SK-N-SH (cell line): ENCODE measurements at regions of chr15 and their contacts with region 1.

Region 1: DNA sequence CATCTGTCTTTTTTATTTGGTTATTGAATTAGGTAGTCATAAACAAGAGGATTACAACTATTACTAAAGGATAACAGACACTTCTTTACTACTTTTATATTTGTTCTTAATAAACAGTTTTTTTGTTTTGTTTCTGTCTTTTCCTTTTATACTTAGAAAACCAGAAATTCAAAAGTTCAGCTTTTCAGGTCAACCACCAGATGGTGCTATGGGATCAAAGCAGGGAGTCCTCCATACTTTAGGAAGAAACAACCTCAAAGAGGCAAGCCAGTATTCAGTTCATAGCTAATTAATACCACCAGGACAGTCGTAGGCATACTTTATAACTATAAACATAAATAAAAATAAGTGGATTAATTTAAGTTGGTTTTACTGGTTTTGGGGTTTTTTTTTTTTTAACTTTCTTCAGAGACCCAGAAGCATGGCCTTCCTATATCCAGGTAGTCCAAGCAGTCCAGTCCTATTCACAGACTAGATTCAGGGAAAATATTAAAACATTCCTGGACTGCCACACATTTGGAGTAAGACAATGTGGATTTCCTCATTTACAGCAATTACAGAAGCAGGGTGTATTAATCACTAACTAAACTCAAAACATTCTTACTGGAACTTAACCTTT is 16.0 kb upstream of the EID1 start:
- DNase-seq: peak; percentile 58
- H3K4me3 ChIP-seq: no peak overlapping the region
- H3K27ac ChIP-seq: no peak overlapping the region
- H3K4me1 ChIP-seq: peaks cover 1 to 31% of the 10 kb centered on the region in 2 experiments; a peak in 3 of 4 replicates
- H3K27me3 ChIP-seq: no peaks in the 10 kb centered on the region
- CTCF ChIP-seq: peak; percentile 98
- EP300 ChIP-seq: no peak
- RAD21 ChIP-seq: peak; percentile 99

Region 2: GRCh38 chr15:48877630-48878595 is 16.0 kb after region 1 on chr15 and contains the start of gene EID1:
- CTCF ChIA-PET with region 1: interaction called, 33 read pairs
- POLR2A ChIA-PET with region 1: interaction called, 3 read pairs
- DNase-seq: peak; percentile 90
- H3K4me3 ChIP-seq: peak within 1 kb of the TSS; percentile 82 to 98
- H3K27ac ChIP-seq: peak within 1 kb of the TSS; percentile 82 to 98
- H3K4me1 ChIP-seq: peaks cover 0 to 12% of the 10 kb centered on the region in 2 experiments; a peak in 2 of 4 replicates
- H3K27me3 ChIP-seq: no peaks in the 10 kb centered on the region
- CTCF ChIP-seq: peak; percentile 16; the same call in 1 of the 2 replicates
- EP300 ChIP-seq: no peak
- RAD21 ChIP-seq: peak; percentile 2; the same call in 1 of the 2 replicates
- polyA plus RNA-seq, gene EID1: 170 and 228 TPM in 2 replicates

Region 3: GRCh38 chr15:49040151-49040550 is 178.2 kb after region 1 on chr15:
- CTCF ChIA-PET with region 1: interaction called, 13 read pairs
- POLR2A ChIA-PET with region 1: no interaction called
- DNase-seq: no peak
- H3K4me3 ChIP-seq: no peak overlapping the region
- H3K27ac ChIP-seq: no peak overlapping the region
- H3K4me1 ChIP-seq: peaks cover 5 to 23% of the 10 kb centered on the region in 2 experiments; a peak in 2 of 4 replicates
- H3K27me3 ChIP-seq: no peaks in the 10 kb centered on the region
- CTCF ChIP-seq: no peak
- EP300 ChIP-seq: no peak
- RAD21 ChIP-seq: no peak

Region 4: DNA sequence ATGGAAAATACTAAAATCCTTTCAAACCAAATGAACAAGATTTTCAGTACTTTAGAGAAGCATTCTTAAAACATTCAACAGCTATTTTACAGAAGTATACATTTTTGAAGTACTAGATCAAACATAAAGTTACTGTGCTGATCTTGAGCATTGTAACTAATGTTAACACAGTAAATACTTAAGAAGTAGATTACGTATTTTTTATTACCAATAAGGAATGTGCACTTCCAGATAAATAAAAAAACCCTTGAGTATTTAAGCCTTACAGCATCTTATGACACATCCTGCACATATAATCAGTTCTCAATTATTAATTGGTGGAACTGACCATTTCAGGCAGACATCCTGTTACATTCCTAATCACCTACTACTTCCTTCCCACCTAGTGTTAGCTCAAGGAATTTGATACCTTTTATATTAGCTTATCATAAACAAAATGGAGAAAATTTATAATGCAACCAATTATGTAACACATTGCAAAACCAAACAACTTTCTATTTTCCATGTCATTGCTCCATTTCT is 260.7 kb after region 1 on chr15:
- CTCF ChIA-PET with region 1: interaction called, 15 read pairs
- POLR2A ChIA-PET with region 1: no interaction called
- DNase-seq: no peak
- H3K4me3 ChIP-seq: no peak overlapping the region
- H3K27ac ChIP-seq: no peak overlapping the region
- H3K4me1 ChIP-seq: no peaks in the 10 kb centered on the region; a peak in 1 of 4 replicates
- H3K27me3 ChIP-seq: no peaks in the 10 kb centered on the region
- CTCF ChIP-seq: no peak
- EP300 ChIP-seq: no peak
- RAD21 ChIP-seq: no peak

Region 5: DNA sequence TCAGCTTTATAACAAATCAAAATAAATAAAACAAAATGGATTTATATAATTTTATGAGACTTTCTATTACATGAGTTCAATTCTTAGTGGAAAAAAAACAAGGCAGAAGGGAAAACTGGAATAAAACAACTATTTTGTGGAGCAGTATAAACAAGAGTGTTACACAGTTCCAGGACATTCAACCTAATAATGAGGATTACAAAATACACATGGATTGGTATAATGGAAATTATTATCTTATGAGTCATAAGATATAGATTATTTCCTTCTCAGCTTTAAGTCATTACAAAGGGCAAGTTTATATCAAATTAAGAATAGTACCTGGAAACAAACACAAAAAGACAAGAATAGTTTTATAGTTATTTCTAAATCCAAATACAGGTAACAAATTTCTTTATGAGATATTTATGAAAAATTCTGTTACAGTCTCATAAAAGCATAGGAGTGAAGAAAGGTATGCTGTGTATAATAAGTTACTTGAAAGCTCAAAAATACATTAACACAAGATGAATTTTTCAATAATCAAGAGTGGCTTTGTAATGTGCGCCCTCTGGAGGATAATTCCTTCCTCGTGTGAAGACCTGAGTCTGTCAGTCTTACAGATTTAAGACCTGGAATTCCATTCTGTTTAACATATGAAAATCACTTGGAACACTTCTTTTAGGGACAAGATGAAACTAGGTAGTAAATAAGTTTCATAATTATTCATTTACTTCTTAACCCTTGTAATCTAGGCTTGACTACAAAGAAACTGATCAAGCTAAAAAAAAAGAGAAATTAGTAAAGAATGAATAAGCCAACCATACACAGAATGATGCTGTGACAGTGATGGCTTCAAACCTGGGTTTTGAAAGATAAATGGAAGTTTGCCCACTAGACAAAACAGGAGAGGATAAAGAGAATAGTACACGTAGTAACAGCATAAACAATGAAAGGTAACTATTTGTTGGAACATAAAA is 284.0 kb after region 1 on chr15:
- CTCF ChIA-PET with region 1: interaction called, 68 read pairs
- POLR2A ChIA-PET with region 1: no interaction called
- DNase-seq: peak; percentile 33
- H3K4me3 ChIP-seq: no peak overlapping the region; a peak in 1 of 4 replicates
- H3K27ac ChIP-seq: peak overlapping the region in 1 of 2 experiments; percentile 39; a peak in 1 of 4 replicates
- H3K4me1 ChIP-seq: peaks cover 6 to 7% of the 10 kb centered on the region in 2 experiments; a peak in 2 of 4 replicates
- H3K27me3 ChIP-seq: no peaks in the 10 kb centered on the region
- CTCF ChIP-seq: peak; percentile 92
- EP300 ChIP-seq: no peak
- RAD21 ChIP-seq: peak; percentile 77

Region 6: DNA sequence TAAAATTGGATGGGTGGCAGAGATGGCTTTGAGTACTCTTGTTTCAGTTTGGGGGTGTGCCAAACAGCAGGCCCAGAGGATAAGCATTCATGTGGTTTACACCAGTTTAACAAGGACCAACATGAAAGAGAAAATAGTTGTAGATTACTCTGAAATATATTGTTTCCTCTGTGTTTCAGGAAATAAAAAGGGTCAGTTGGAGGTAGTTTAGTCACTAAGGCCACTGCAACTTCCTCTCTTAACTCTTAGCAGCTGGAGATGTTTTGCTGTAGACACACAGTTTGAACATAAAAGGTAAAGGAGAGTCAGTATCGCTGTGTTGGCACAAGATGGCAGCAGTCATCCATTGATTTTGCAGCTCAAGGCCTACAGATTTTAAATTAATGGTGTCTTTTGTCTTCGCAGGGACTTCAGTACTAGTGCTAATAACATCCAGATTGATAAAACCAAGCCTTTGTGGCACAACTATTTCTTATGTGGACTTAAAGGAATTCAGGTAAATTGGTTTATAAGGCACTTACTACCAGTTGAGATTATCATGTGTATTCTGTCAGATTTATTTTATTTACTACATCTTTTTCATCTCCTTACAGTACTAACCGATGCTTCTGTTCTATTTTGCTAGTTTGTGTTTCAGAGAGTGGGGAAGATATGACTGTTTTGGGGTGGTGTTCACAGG is 373.7 kb after region 1 on chr15:
- CTCF ChIA-PET with region 1: interaction called, 28 read pairs
- POLR2A ChIA-PET with region 1: no interaction called
- DNase-seq: peak; percentile 44
- H3K4me3 ChIP-seq: no peak overlapping the region; a peak in 1 of 4 replicates
- H3K27ac ChIP-seq: peak overlapping the region; percentile 30 to 86; a peak in 3 of 4 replicates
- H3K4me1 ChIP-seq: peaks cover 28 to 33% of the 10 kb centered on the region in 2 experiments; a peak in 3 of 4 replicates
- H3K27me3 ChIP-seq: no peaks in the 10 kb centered on the region
- CTCF ChIP-seq: peak; percentile 92
- EP300 ChIP-seq: no peak; a peak in 1 of 4 replicates
- RAD21 ChIP-seq: peak; percentile 99

Region 7: GRCh38 chr15:50145451-50145872 is 1283.5 kb after region 1 on chr15:
- CTCF ChIA-PET with region 1: interaction called, 26 read pairs
- POLR2A ChIA-PET with region 1: no interaction called
- DNase-seq: peak; percentile 67
- H3K4me3 ChIP-seq: no peak overlapping the region; a peak in 1 of 4 replicates
- H3K27ac ChIP-seq: no peak overlapping the region
- H3K4me1 ChIP-seq: no peaks in the 10 kb centered on the region; a peak in 1 of 4 replicates
- H3K27me3 ChIP-seq: no peaks in the 10 kb centered on the region
- CTCF ChIP-seq: peak; percentile 70
- EP300 ChIP-seq: no peak
- RAD21 ChIP-seq: peak; percentile 84